ENCODE measurements at regions of chr1 and their contacts with region 1.

Region 1: DNA sequence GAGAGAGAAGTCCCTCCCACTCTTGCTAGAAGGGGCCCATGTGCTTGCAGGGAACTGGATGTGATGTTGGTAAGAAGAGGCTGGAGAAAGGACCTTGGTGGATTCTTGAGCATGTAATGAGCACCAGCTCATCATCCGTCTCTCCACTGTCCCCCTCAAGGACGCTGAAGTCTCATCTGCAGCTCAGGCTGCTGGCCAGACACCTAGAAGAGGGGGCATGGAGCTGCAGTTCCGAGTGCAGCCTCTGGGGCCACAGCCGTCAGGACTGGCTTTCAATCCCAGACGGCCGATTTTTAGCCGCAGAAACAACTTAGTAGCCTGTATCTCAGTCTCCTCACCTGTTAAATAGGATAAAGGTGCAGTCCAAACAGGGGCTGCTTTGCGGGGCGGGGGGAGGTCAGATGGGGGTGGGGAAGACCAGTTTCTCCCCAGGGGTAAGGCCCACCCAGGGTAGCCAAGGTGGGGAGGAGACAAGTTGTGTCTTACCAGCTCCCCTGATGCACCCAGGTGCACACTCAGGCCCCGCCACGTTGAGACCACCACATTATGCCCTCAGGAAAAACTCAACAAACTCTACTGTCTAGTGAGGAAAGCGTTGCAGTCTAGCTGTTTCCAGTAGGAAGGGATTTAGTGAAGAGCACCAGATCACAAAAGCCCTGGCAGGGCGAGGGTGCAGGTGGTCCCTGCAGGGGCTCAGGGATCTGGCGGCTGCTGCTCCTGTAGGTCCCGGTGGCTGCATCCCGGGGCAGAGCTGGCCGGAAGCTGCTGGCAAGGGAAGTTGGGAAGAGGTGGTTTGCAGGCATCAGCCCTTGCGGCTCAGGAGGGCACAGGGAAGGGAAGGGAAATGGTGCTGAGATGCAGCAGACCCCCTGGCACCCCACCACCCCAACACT is 29.5 kb downstream of the LDLRAP1 start:
- DNase-seq: peak; percentile 80
- ATAC-seq: peak; percentile 73
- H3K4me3 Mint-ChIP-seq: no peak overlapping the region
- H3K27ac Mint-ChIP-seq: no peak overlapping the region
- H3K4me1 Mint-ChIP-seq: peaks cover 49% of the 10 kb centered on the region
- H3K27me3 Mint-ChIP-seq: no peaks in the 10 kb centered on the region; the same call in 1 of the 2 replicates
- CTCF ChIP-seq: peak; percentile 75

Region 2: GRCh38 chr1:25520446-25521061 is 52.4 kb before region 1 on chr1:
- CTCF ChIA-PET with region 1: interaction called, 15 read pairs
- POLR2A ChIA-PET with region 1: no interaction called
- DNase-seq: peak; percentile 66
- ATAC-seq: no peak
- H3K4me3 Mint-ChIP-seq: no peak overlapping the region
- H3K27ac Mint-ChIP-seq: peak overlapping the region; percentile 76; the same call in 1 of the 2 replicates
- H3K4me1 Mint-ChIP-seq: peaks cover 23% of the 10 kb centered on the region
- H3K27me3 Mint-ChIP-seq: no peaks in the 10 kb centered on the region; the same call in 1 of the 2 replicates
- CTCF ChIP-seq: peak; percentile 65

Region 3: DNA sequence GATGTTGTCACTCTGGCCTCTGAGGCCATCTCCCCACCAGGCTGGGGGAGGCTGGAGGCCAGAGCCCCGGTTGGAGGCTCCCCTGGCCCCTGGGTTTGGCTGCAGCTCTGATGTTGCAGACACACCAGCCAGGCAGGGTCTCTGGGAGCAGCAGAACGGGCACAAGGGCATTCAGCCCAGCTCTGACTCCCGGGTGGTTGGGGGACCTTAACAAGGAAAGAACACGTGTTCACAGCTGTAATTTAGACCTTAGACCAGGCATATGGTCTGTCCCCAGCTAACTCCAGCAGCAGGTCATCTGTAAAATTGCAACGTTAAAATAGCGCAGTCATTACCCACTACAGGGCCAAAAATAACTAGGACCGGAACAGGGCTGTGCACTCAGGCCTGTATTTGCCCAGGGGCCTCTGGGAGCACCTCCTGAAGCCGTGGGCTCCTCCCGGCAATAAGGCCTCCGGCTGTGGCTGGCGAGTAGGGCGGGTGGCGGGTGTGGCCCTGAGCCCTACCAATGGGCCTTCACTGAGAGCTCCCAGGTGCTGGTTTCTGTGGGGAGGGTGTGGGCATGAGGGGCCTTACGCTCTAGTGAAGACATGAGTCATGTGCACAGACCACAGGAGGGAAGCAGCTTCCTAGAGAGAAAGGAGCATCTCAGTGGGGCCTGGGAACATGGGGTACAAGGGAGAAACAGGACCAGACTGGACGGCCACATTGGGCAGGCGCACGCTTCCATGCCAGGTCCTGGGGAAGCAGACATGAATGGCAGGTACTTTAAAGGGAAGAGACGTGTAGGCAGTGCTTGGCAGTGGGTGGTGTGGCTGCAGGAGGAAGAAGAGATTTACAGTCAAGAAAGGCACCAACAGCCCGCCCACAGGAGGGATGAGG is 23.4 kb before region 1 on chr1:
- CTCF ChIA-PET with region 1: interaction called, 11 read pairs
- POLR2A ChIA-PET with region 1: no interaction called
- DNase-seq: no peak
- ATAC-seq: no peak
- H3K4me3 Mint-ChIP-seq: no peak overlapping the region
- H3K27ac Mint-ChIP-seq: no peak overlapping the region
- H3K4me1 Mint-ChIP-seq: peaks cover 12% of the 10 kb centered on the region
- H3K27me3 Mint-ChIP-seq: peaks cover 3% of the 10 kb centered on the region
- CTCF ChIP-seq: no peak

Region 4: GRCh38 chr1:25608488-25609178 is 35.7 kb after region 1 on chr1:
- CTCF ChIA-PET with region 1: interaction called, 38 read pairs
- POLR2A ChIA-PET with region 1: no interaction called
- DNase-seq: peak; percentile 85
- ATAC-seq: peak; percentile 88
- H3K4me3 Mint-ChIP-seq: no peak overlapping the region
- H3K27ac Mint-ChIP-seq: no peak overlapping the region
- H3K4me1 Mint-ChIP-seq: peaks cover 4% of the 10 kb centered on the region
- H3K27me3 Mint-ChIP-seq: peaks cover 13% of the 10 kb centered on the region
- CTCF ChIP-seq: peak; percentile 47

Region 5: GRCh38 chr1:25725490-25726130 is 152.7 kb after region 1 on chr1:
- CTCF ChIA-PET with region 1: interaction called, 10 read pairs
- POLR2A ChIA-PET with region 1: no interaction called
- DNase-seq: no peak
- ATAC-seq: peak; percentile 12; the same call in 1 of the 2 replicates
- H3K4me3 Mint-ChIP-seq: no peak overlapping the region
- H3K27ac Mint-ChIP-seq: no peak overlapping the region
- H3K4me1 Mint-ChIP-seq: peaks cover 55% of the 10 kb centered on the region
- H3K27me3 Mint-ChIP-seq: no peaks in the 10 kb centered on the region
- CTCF ChIP-seq: no peak

Region 6: DNA sequence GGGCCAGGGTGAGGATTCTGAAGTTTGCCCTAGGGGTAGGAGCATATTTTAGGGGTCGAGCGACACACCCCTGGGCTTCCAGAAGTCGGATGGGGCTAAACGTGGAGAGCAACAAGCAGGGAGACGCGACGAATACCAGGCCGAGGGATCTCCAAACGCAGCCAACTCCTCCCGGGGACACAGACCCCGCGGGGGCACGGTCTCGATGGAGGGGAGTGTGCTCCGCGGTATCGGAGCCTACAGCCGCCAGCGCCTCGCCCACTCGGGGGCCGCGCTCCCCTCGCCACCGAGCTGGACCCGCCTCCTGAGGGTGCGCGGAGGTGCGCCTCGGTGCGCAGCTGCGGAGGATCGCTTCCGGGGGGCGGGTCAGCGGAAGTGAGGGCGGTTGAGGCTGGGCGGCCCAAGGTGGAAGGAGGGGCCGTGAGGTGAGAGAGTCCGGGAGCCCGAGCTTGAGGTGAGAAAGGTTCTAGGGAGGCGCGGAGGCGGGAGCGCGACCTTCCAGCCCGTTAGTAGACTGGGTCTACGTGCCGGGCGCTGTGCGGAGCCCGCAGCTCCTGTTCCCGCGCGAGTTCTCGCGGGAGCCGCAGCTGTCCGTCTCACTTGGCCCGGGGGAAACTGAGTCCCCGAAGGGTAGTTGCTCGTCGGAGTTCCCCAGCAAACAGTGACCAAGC is 246.8 kb after region 1 on chr1 and contains the start of gene MTFR1L:
- CTCF ChIA-PET with region 1: interaction called, 26 read pairs
- POLR2A ChIA-PET with region 1: no interaction called
- DNase-seq: peak; percentile 84
- ATAC-seq: peak; percentile 81
- H3K4me3 Mint-ChIP-seq: peak within 1 kb of the TSS; percentile 98
- H3K27ac Mint-ChIP-seq: peak within 1 kb of the TSS; percentile 95
- H3K4me1 Mint-ChIP-seq: peaks cover 35% of the 10 kb centered on the region
- H3K27me3 Mint-ChIP-seq: peaks cover 10% of the 10 kb centered on the region
- CTCF ChIP-seq: no peak
- total RNA-seq, gene MTFR1L: 28.9 to 32.2 TPM (median 30.5 TPM) in 3 replicates

Region 7: GRCh38 chr1:25867210-25867991 is 294.4 kb after region 1 on chr1:
- CTCF ChIA-PET with region 1: no interaction called
- POLR2A ChIA-PET with region 1: no interaction called
- DNase-seq: peak; percentile 44
- ATAC-seq: peak; percentile 67
- H3K4me3 Mint-ChIP-seq: no peak overlapping the region
- H3K27ac Mint-ChIP-seq: peak overlapping the region; percentile 71
- H3K4me1 Mint-ChIP-seq: peaks cover 23% of the 10 kb centered on the region
- H3K27me3 Mint-ChIP-seq: no peaks in the 10 kb centered on the region
- CTCF ChIP-seq: no peak

Measured in WTC11 (cell line).